Upper lobe of right lung (tissue), 1 donor: ENCODE measurements at regions of chr12 and their contacts with region 1.

Region 1: DNA sequence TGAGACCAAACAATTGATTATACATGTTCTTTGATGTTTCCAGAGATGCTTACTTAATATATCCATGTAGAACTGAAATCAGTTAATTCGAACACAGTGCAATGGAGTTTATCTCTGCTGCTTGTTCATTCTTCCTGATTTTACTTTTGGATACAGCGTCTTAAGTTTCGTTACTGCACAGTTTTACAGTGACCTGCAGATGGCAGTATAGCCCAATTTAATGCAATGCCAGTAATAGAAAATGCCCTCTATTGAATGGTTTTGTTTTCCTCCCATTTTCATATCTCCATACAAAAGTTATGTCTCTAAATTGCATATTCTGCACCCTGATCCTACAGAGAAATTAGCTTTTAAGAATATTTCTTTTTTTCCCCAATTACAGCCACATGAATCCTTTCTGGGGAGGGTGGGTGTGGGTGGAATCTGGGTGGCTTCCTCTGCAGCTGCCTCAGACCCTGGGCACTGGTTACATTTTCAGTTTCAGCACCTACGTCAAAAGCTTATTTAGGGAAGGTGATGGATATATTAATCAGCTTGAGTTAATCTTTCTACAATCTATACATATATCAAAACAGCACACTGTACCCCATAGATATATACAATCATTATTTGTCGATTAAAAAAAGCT is 101.1 kb upstream of the DCD start:
- DNase-seq: no peak
- ATAC-seq: peak; percentile 75
- H3K4me3 ChIP-seq: no peak overlapping the region
- H3K27ac ChIP-seq: no peak overlapping the region
- H3K4me1 ChIP-seq: no peaks in the 10 kb centered on the region
- H3K27me3 ChIP-seq: no peaks in the 10 kb centered on the region
- CTCF ChIP-seq: peak; percentile 83

Region 2: DNA sequence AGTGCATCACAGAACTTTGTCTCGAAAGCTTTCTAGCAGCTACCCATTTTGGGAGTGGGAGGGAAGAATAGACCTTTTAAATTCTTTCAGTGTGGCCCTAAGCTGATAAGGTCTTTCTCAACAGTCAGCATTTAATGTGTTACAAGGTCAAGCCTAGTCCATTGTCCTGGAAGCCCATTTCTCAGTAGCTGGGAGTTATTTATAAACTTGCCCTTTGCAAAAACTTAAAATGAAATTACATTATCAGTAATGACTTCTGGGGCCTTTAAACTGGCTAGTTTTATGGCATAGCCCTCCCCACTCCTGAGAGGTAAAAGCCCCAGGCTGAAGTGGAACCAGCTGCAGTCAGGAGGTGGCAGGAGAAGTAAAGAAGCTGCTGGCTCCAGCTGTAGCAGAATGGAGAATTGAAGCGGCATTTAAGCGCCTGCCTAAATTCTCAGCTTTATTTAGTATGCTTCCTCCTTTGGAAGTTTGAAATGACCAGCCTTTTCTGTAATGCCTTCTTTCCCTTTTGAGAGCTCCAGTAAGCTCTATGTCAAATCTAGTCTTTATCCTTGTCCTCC is 411.9 kb before region 1 on chr12:
- intact Hi-C with region 1: no loop called
- DNase-seq: no peak
- ATAC-seq: peak; percentile 57
- H3K4me3 ChIP-seq: no peak overlapping the region
- H3K27ac ChIP-seq: no peak overlapping the region
- H3K4me1 ChIP-seq: peaks cover 49% of the 10 kb centered on the region
- H3K27me3 ChIP-seq: no peaks in the 10 kb centered on the region
- CTCF ChIP-seq: no peak

Region 3: GRCh38 chr12:54958048-54958658 is 208.8 kb after region 1 on chr12:
- intact Hi-C with region 1: loop called (anchors 10 kb)
- DNase-seq: no peak
- ATAC-seq: peak; percentile 77
- H3K4me3 ChIP-seq: no peak overlapping the region
- H3K27ac ChIP-seq: no peak overlapping the region
- H3K4me1 ChIP-seq: no peaks in the 10 kb centered on the region
- H3K27me3 ChIP-seq: peaks cover 3% of the 10 kb centered on the region
- CTCF ChIP-seq: peak; percentile 72

Region 4: GRCh38 chr12:55057481-55057880 is 308.2 kb after region 1 on chr12:
- intact Hi-C with region 1: loop called (anchors 10 kb)
- DNase-seq: no peak
- ATAC-seq: no peak
- H3K4me3 ChIP-seq: no peak overlapping the region
- H3K27ac ChIP-seq: no peak overlapping the region
- H3K4me1 ChIP-seq: no peaks in the 10 kb centered on the region
- H3K27me3 ChIP-seq: peaks cover under 1% of the 10 kb centered on the region
- CTCF ChIP-seq: no peak